Activated CD8-positive, alpha-beta T cell treated with anti-CD3 and anti-CD28 coated beads for 36 hours (primary cell): ENCODE measurements at regions of chr6 and their contacts with region 1.

Region 1: DNA sequence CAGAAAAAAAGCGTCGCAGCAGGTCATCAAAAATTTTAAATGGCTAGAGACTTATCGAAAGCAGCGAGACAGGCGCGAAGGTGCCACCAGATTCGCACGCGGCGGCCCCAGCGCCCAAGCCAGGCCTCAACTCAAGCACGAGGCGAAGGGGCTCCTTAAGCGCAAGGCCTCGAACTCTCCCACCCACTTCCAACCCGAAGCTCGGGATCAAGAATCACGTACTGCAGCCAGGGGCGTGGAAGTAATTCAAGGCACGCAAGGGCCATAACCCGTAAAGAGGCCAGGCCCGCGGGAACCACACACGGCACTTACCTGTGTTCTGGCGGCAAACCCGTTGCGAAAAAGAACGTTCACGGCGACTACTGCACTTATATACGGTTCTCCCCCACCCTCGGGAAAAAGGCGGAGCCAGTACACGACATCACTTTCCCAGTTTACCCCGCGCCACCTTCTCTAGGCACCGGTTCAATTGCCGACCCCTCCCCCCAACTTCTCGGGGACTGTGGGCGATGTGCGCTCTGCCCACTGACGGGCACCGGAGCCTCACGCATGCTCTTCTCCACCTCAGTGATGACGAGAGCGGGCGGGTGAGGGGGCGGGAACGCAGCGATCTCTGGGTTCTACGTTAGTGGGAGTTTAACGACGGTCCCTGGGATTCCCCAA is at the start of gene EEF1A1:
- DNase-seq: peak; percentile 100
- ATAC-seq: peak; percentile 78
- H3K4me3 Mint-ChIP-seq: peak within 1 kb of the TSS; percentile 97
- H3K27ac Mint-ChIP-seq: peak within 1 kb of the TSS; percentile 100
- H3K4me1 Mint-ChIP-seq: peaks cover 25% of the 10 kb centered on the region
- H3K27me3 Mint-ChIP-seq: peaks cover 2% of the 10 kb centered on the region
- CTCF ChIP-seq: no peak
- total RNA-seq, gene EEF1A1: 15,479 to 15,634 TPM

Region 2: DNA sequence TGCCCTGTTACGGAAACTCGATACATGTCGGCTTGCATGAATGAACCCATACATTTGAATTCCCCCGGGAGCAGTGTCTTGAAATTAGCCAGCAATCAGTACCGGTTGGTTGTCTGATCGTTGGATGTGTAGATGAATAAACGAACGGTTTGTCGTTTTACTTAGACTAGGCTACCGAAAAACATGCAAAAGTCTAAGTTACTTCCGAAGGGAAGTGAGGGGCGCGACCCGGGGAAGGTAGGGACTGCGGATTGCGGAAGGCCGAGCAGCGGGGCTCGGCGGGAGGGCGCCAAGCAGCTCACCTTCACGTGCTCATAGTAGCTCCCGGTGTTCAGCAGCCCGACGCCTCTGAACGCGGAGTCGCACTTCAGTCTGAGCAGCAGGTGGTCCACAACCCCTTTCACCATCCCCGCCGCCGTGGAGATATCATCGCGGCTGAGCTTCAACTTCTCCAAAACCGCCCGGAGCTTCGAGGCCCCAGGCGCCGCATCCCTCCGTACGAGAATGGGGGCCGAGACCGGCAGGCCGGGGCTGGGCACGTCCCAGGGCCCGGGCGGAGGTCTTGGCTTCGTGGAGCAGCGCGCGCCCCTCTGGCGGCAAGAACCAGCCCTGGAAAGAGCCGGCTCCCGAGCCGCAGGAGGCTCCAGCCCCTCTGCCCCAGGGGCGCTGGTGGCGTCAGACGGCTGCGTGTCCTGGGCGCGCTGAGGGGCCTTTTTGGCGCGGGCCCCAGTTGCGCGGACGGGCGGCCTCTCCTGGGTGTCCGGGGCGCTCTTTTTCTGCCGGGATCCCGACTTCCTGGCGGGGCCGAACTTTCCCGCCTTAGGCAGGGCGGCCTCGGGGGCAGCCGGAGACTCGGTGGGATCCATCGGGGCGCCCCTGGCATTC is 69.4 kb before region 1 on chr6:
- CTCF ChIA-PET with region 1: interaction called, 3 read pairs
- POLR2A ChIA-PET with region 1: interaction called, 37 read pairs
- intact Hi-C with region 1: no loop called
- DNase-seq: peak; percentile 62
- ATAC-seq: peak; percentile 52
- H3K4me3 Mint-ChIP-seq: peak overlapping the region; percentile 93
- H3K27ac Mint-ChIP-seq: peak overlapping the region; percentile 91
- H3K4me1 Mint-ChIP-seq: peaks cover 17% of the 10 kb centered on the region
- H3K27me3 Mint-ChIP-seq: no peaks in the 10 kb centered on the region
- CTCF ChIP-seq: no peak

Region 3: GRCh38 chr6:73506246-73506645 is 14.6 kb before region 1 on chr6:
- CTCF ChIA-PET with region 1: interaction called, 3 read pairs
- POLR2A ChIA-PET with region 1: interaction called, 194 read pairs
- intact Hi-C with region 1: no loop called
- DNase-seq: no peak
- ATAC-seq: no peak
- H3K4me3 Mint-ChIP-seq: no peak overlapping the region
- H3K27ac Mint-ChIP-seq: no peak overlapping the region
- H3K4me1 Mint-ChIP-seq: no peaks in the 10 kb centered on the region
- H3K27me3 Mint-ChIP-seq: no peaks in the 10 kb centered on the region
- CTCF ChIP-seq: no peak

Region 4: GRCh38 chr6:73580247-73581149 is 59.7 kb after region 1 on chr6:
- CTCF ChIA-PET with region 1: interaction called, 18 read pairs
- POLR2A ChIA-PET with region 1: interaction called, 159 read pairs
- intact Hi-C with region 1: loop called (anchors 2 kb)
- DNase-seq: peak; percentile 89
- ATAC-seq: peak; percentile 90
- H3K4me3 Mint-ChIP-seq: peak overlapping the region; percentile 69
- H3K27ac Mint-ChIP-seq: peak overlapping the region; percentile 99
- H3K4me1 Mint-ChIP-seq: peaks cover 28% of the 10 kb centered on the region
- H3K27me3 Mint-ChIP-seq: no peaks in the 10 kb centered on the region
- CTCF ChIP-seq: no peak

Region 5: DNA sequence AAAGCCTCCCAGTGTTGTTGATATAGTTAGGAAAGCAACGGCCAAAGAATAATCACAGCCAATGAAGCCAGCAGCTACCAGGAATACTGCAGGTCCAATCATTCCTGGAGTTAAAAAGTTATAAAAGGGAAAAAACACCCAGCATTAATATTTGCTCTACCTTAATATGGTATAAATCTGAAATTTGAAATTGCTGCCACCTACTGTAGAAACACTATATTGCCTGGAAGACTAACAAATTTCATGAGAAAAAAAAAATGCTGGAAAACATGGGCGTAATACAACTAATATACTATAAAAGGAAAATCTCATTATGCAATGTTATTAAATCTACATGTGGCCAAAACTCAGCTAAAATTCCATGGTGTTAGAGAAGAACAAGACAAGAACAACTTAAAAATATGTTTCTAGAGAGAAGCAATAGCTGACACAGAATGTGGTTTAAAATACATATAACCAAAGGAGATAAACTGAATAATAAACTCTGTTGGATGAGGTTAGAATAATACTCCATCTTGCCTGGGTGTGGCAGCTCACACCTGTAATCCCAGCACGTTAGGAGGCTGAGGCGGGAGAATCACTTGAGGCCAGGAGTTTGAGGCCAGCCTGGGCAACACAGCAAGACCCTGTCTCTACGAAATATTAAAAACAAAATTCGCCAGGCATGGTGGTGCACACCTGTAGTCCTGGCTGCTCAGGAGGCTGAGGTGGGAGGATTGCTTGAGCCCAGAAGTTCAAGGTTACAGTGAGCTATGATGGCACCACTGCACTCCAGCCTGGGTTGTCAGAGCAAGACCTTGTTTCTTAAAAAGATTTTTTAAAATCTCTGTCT is 89.8 kb after region 1 on chr6:
- CTCF ChIA-PET with region 1: interaction called, 41 read pairs
- POLR2A ChIA-PET with region 1: interaction called, 204 read pairs
- intact Hi-C with region 1: loop called (anchors 5 kb)
- DNase-seq: no peak
- ATAC-seq: peak; percentile 66
- H3K4me3 Mint-ChIP-seq: no peak overlapping the region
- H3K27ac Mint-ChIP-seq: no peak overlapping the region
- H3K4me1 Mint-ChIP-seq: peaks cover 4% of the 10 kb centered on the region
- H3K27me3 Mint-ChIP-seq: no peaks in the 10 kb centered on the region
- CTCF ChIP-seq: peak; percentile 73